ENCODE measurements at regions of chr13 and their contacts with region 1.

Region 1: DNA sequence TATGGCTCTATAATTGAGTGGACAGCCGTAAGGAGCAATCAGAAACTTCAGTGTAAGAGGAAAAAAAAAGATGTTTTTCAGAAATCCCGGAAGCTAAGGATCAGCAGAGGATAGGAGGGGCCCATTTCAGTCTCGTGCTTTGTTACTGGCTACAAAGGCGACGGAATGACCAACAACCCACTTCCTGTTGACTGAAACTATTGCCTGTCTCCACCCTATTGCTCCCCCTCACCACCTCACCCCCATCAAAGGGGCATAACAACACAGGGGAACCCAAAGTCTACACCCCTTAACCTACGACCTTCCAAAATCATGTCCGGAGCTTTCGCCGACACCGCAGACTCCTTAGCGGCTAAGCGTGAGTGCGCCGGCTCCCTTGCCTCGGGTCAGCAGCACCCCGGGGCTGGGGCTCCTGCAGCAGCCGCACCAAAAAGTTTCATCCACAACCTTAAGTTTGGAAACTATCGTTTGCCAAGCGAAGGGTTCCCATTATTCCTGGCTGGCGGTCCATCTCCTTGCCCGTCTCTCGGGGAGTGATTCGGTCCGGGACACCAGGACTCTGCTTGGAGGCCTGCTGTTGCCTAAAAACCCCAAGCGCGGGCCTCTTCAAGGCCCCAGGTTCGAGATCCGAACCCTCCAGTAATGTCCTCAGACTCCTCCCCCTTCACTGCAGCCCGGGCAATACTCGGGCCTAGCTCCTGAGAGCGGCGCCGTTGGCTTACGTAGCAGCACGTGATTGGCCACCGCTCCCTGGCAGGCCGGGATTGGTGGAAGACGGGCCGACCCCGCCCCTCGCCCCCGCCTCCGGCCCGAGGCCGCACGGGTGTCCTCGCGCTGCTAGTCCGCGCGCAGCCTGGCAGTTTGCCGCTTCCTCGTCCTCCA is at the start of gene TPP2:
- DNase-seq: peak; percentile 95 to 99 (median 97)
- ATAC-seq: peak; percentile 91
- H3K4me3 ChIP-seq: peak within 1 kb of the TSS; percentile 97
- H3K4me3 Mint-ChIP-seq: peak within 1 kb of the TSS; percentile 90 to 99 (median 98)
- H3K27ac ChIP-seq: peak within 1 kb of the TSS; percentile 94
- H3K27ac Mint-ChIP-seq: peak within 1 kb of the TSS; percentile 99 to 100 (median 100)
- H3K4me1 ChIP-seq: peaks cover 34 to 45% of the 10 kb centered on the region in 2 donors
- H3K4me1 Mint-ChIP-seq: peaks cover 37 to 70% (median 65%) of the 10 kb centered on the region in 7 donors
- H3K27me3 ChIP-seq: no peaks in the 10 kb centered on the region
- H3K27me3 Mint-ChIP-seq: no peaks in the 10 kb centered on the region
- total RNA-seq, gene TPP2: 92.1 to 158 (median 119) TPM

Region 2: GRCh38 chr13:102394158-102395053 is 202.0 kb before region 1 on chr13:
- CTCF ChIA-PET with region 1: no interaction called
- POLR2A ChIA-PET with region 1: interaction called, 8 read pairs
- intact Hi-C with region 1: loop called (anchors 1 kb)
- DNase-seq: peak; percentile 91 to 98 (median 95)
- ATAC-seq: peak; percentile 94
- H3K4me3 ChIP-seq: peak overlapping the region; percentile 96
- H3K4me3 Mint-ChIP-seq: peak overlapping the region; percentile 85 to 93 (median 90)
- H3K27ac ChIP-seq: peak overlapping the region; percentile 78
- H3K27ac Mint-ChIP-seq: peak overlapping the region in 8 of 9 donors; percentile 82 to 94 (median 88)
- H3K4me1 ChIP-seq: peaks cover 0 to 12% of the 10 kb centered on the region in 2 donors
- H3K4me1 Mint-ChIP-seq: peaks cover 6 to 25% (median 20%) of the 10 kb centered on the region in 7 donors
- H3K27me3 ChIP-seq: no peaks in the 10 kb centered on the region
- H3K27me3 Mint-ChIP-seq: peaks cover 13 to 41% (median 22%) of the 10 kb centered on the region in 5 donors

Region 3: DNA sequence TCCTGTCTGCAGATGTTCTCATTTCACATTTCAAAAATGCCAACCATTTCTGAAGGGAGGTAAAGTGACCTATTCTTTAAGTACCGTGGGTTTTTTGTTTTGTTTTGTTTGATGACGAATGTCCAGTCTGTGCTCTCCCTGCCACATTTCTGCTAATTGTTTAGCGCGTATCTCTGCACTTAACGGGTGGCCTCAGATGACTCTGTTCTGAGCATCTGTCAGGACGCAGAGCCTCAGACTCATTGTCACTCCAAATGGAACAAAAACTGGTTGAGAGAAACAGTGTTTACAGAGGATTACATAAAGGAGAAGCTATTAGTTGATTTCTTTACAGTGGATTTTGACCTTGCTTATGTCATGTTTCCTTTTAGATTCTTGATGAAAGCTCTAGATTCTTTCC is 24.1 kb after region 1 on chr13:
- CTCF ChIA-PET with region 1: interaction called, 3 read pairs
- POLR2A ChIA-PET with region 1: interaction called, 115 read pairs
- intact Hi-C with region 1: loop called in 1 of 2 experiments (anchors 1 kb)
- DNase-seq: no peak
- ATAC-seq: no peak
- H3K4me3 ChIP-seq: no peak overlapping the region
- H3K4me3 Mint-ChIP-seq: no peak overlapping the region
- H3K27ac ChIP-seq: no peak overlapping the region
- H3K27ac Mint-ChIP-seq: peak overlapping the region in 1 of 9 donors; percentile 26
- H3K4me1 ChIP-seq: no peaks in the 10 kb centered on the region
- H3K4me1 Mint-ChIP-seq: peaks cover 0 to 23% (median 8%) of the 10 kb centered on the region in 7 donors
- H3K27me3 ChIP-seq: no peaks in the 10 kb centered on the region
- H3K27me3 Mint-ChIP-seq: no peaks in the 10 kb centered on the region

Region 4: GRCh38 chr13:102657630-102658029 is 61.2 kb after region 1 on chr13:
- CTCF ChIA-PET with region 1: interaction called, 3 read pairs
- POLR2A ChIA-PET with region 1: interaction called, 5 read pairs
- intact Hi-C with region 1: loop called in 1 of 2 experiments (anchors 1 kb)
- DNase-seq: peak in 1 of 9 donors; percentile 5
- ATAC-seq: no peak
- H3K4me3 ChIP-seq: no peak overlapping the region
- H3K4me3 Mint-ChIP-seq: no peak overlapping the region
- H3K27ac ChIP-seq: no peak overlapping the region
- H3K27ac Mint-ChIP-seq: no peak overlapping the region
- H3K4me1 ChIP-seq: no peaks in the 10 kb centered on the region
- H3K4me1 Mint-ChIP-seq: peaks cover 0 to 6% (median 0%) of the 10 kb centered on the region in 7 donors
- H3K27me3 ChIP-seq: no peaks in the 10 kb centered on the region
- H3K27me3 Mint-ChIP-seq: no peaks in the 10 kb centered on the region

Region 5: DNA sequence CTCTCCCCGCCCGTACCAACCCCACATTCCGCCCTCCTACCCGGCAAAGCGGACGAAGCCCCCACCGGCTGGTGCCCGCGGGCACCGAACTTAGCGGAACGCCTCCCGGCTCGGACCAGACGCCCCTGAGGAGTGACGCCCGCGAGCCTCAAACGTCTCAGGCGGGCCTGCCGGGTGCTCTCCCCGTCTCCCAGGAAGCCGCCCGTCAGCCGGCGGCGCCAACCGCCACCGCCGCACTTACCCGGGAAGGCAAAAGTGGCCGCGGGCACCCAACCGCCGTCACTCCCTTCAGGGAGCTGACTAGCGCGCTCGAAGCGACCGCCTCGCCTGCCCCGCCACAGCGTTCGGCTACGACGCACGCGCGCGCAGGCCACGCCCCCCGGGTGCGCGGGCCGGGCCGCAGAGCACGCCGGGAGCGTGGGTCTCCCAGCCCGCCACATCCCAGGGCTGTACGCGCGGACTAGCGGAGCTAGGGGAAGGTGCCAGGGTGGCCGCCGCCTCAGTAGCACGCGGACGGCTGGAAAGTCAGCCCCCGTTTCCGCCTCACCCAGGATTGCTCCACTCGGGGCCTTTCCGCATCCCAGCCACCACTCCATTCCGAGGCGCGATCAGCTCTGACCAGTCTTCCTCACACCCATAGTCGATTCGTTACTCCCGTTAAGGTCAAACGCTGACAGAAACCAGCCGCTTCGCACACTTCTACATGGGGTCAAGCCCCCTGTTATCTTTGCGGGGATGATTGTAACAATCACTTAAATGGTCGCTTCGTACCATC is 177.2 kb after region 1 on chr13 and contains the start of gene TEX30:
- CTCF ChIA-PET with region 1: no interaction called
- POLR2A ChIA-PET with region 1: interaction called, 41 read pairs
- intact Hi-C with region 1: loop called (anchors 1 kb)
- DNase-seq: peak; percentile 78 to 95 (median 91)
- ATAC-seq: peak; percentile 98
- H3K4me3 ChIP-seq: peak within 1 kb of the TSS; percentile 89
- H3K4me3 Mint-ChIP-seq: peak within 1 kb of the TSS; percentile 87 to 97 (median 94)
- H3K27ac ChIP-seq: peak within 1 kb of the TSS; percentile 79
- H3K27ac Mint-ChIP-seq: peak within 1 kb of the TSS; percentile 87 to 97 (median 94)
- H3K4me1 ChIP-seq: peaks cover 2 to 7% of the 10 kb centered on the region in 2 donors
- H3K4me1 Mint-ChIP-seq: peaks cover 15 to 56% (median 46%) of the 10 kb centered on the region in 7 donors
- H3K27me3 ChIP-seq: no peaks in the 10 kb centered on the region
- H3K27me3 Mint-ChIP-seq: no peaks in the 10 kb centered on the region
- total RNA-seq, gene TEX30: 3.7 to 30.8 (median 8.3) TPM

Region 6: DNA sequence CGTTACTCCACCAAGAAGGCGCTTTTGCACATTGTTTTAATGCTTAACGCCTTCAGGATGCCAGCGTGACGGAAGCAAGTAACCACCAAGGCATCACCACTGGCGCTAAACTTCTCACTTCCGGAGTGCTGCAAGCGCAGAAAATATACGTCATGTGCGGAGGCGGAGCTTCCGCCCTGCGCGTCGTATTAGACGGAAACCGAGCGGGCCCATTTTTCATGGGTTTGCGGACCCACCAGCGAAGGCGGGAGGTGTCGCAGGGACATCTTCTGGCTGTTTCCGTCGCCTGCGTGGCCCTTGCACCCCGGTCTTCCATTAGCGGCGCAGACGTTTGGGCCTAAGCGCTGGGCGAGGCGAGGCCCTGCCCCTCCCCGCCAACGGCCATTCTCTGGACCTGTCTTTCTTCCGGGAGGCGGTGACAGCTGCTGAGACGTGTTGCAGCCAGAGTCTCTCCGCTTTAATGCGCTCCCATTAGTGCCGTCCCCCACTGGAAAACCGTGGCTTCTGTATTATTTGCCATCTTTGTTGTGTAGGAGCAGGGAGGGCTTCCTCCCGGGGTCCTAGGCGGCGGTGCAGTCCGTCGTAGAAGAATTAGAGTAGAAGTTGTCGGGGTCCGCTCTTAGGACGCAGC is 249.4 kb after region 1 on chr13 and contains the start of gene ERCC5:
- CTCF ChIA-PET with region 1: interaction called, 26 read pairs
- POLR2A ChIA-PET with region 1: interaction called, 351 read pairs
- intact Hi-C with region 1: loop called (anchors 1 kb)
- DNase-seq: peak; percentile 93 to 99 (median 97)
- ATAC-seq: peak; percentile 89
- H3K4me3 ChIP-seq: peak within 1 kb of the TSS; percentile 98
- H3K4me3 Mint-ChIP-seq: peak within 1 kb of the TSS; percentile 86 to 100 (median 96)
- H3K27ac ChIP-seq: peak within 1 kb of the TSS; percentile 97
- H3K27ac Mint-ChIP-seq: peak within 1 kb of the TSS; percentile 93 to 100 (median 99)
- H3K4me1 ChIP-seq: peaks cover 19 to 34% of the 10 kb centered on the region in 2 donors
- H3K4me1 Mint-ChIP-seq: peaks cover 31 to 52% (median 42%) of the 10 kb centered on the region in 7 donors
- H3K27me3 ChIP-seq: no peaks in the 10 kb centered on the region
- H3K27me3 Mint-ChIP-seq: peaks cover 0 to 4% (median 0%) of the 10 kb centered on the region in 5 donors
- total RNA-seq, gene ERCC5: 79.6 to 158 (median 123) TPM

Region 7: DNA sequence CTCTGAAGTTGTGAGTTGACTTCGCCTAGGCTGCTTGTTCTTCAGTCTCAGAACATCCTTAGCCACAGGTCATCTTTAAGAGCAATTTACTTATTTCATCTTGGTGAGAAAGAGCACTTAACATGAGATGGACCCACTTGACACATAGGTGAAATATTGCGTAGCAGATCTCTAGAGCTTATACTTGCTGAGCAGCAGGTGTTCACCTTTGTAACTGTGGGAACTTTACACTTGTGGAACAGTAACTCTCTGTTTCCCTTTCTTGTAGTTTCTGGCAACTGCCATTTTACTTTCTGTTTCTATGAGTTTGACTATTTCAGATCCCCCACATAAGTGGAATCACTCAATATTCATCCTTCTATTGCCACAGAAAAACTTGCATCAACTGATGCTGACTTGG is 374.2 kb after region 1 on chr13:
- CTCF ChIA-PET with region 1: no interaction called
- POLR2A ChIA-PET with region 1: no interaction called
- intact Hi-C with region 1: no loop called
- DNase-seq: no peak
- ATAC-seq: no peak
- H3K4me3 ChIP-seq: no peak overlapping the region
- H3K4me3 Mint-ChIP-seq: no peak overlapping the region
- H3K27ac ChIP-seq: no peak overlapping the region
- H3K27ac Mint-ChIP-seq: no peak overlapping the region
- H3K4me1 ChIP-seq: no peaks in the 10 kb centered on the region
- H3K4me1 Mint-ChIP-seq: no peaks in the 10 kb centered on the region
- H3K27me3 ChIP-seq: no peaks in the 10 kb centered on the region
- H3K27me3 Mint-ChIP-seq: peaks cover 0 to 17% (median 4%) of the 10 kb centered on the region in 5 donors

Measured in naive thymus-derived CD4-positive, alpha-beta T cell (primary cell).